ENCODE measurements at regions of chrX and their contacts with region 1.

Region 1: DNA sequence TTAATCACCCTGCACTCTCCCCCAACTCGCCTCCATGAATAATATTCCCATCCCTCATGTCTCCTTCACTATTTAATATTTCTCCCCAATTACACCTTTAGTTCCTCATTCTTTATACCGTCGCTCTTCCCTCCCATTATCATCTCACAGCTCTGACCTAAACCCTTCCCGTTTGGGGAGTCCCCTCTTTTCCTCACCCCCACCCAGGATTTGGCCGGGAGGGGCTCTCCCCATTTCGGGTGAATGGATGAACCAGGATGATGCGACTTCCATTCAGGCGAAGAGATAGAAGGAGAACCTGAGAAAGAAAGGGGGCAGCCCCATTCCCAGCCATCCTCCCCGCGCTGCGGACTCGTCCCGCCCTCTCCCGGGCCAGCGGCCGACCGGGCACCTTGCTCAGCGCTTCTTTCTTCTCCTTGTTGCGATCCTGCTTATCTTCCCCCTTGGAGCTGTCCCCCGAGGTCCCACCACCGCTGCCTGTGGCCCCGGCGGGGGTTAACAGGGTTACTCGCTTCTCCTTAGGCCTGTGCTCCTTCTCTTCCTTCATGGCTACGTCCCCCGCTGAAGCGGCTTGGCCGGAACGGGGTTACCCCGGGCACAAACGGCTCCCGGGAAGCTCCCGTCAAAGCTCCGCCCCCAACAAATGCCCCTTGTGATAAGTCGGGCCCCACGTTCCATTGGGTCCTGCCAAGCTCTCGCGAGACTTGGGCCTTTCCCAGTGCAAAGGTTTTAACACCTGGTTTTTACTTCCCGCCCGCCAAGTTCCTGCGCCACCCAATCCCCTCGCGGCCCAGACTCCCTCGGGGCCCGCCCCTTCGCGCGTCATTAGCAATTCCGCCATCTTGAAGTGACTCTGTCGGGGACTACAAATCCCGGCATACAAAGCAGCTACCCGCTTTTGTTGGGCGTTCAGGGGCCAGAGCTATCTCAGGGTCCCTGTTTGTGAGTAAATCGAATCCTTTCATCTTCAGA is at the start of gene UPF3B:
- DNase-seq: peak; percentile 98 to 99
- H3K4me3 ChIP-seq: peak within 1 kb of the TSS; percentile 89
- H3K27ac ChIP-seq: peak within 1 kb of the TSS; percentile 62
- H3K4me1 ChIP-seq: no peaks in the 10 kb centered on the region
- H3K27me3 ChIP-seq: no peaks in the 10 kb centered on the region
- CTCF ChIP-seq: no peak
- total RNA-seq, gene UPF3B: 19.8 and 24.3 TPM in 2 replicates

Region 2: DNA sequence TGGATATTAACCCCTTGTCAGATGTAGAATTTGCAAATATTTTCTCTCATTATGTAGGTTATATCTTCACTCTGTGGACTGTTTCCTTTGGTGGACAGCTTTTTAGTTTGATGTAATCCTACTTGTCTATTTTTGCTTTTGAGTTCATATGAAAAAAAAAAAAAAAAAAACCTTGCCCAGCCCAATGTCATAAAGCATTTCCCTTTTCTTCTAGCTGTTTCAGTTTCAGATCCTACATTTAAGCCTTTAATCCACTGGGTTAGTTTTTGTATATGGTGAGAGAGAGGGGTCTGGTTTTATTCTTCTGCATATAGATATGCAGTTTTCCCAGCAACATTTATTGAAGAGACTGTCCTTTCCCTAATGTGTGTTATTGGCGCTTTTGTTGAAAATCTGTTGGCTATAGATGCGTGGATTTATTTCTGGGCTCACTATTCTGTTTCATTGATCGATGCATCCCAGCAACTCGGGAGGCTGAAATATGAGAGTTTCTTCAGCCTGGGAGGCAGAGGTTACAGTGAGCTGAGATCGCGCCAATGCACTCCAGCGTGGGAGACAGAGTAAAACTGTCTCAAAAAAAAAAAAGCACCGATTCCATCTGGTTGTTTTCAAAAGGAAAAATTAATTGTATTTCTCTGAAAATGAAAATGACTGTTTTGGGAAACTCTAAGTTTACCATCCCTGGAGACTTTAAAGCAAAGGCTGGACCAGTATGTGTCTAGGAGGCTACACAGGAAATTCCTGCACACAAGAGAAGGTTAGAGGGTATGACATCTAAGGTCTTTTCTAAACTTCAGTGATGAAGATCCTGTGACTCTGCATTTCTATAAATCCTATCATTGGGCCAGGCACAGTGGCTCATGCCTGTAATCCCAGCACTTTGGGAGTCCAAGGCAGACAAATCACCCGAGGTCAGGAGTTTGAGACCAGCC is 323.1 kb before region 1 on chrX:
- CTCF ChIA-PET with region 1: no interaction called
- POLR2A ChIA-PET with region 1: interaction called, 30 read pairs
- intact Hi-C with region 1: no loop called
- DNase-seq: no peak
- H3K4me3 ChIP-seq: no peak overlapping the region
- H3K27ac ChIP-seq: no peak overlapping the region
- H3K4me1 ChIP-seq: no peaks in the 10 kb centered on the region
- H3K27me3 ChIP-seq: no peaks in the 10 kb centered on the region
- CTCF ChIP-seq: no peak

Region 3: DNA sequence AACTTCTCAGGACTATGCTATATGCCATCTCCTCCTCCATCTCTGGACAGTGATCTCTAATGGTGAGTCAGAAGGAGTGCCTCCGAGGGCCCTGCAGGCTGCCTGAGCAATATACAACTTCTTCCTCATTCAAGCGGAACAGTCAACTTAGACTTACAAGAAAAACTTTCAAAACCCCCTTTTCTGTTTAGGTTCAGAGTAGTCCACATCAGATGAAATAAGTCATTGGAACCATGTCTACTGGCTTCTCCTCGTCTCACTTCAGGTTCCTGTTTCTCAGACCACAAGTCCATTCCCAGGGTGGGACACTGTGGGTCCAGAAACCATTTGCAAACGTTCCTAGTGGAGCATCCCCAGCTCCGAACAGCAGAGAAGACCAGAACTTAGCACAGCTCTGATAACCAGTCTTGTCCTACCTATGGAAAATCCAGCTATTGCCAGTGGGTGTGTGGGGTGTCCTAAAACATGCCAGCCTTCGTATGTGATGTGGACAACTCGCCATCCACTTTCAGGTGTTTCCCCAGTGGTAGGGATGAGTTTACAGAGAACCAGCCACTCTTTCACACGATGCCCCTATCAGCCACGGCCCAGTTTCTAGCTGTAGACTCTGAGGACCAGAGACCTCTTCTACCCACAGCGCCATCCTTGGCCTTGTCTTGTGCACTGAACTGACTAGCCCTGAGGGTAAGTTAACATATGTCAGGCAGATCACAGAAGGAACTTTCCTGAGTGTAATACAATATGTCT is 213.8 kb before region 1 on chrX:
- CTCF ChIA-PET with region 1: no interaction called
- POLR2A ChIA-PET with region 1: no interaction called
- intact Hi-C with region 1: no loop called
- DNase-seq: no peak
- H3K4me3 ChIP-seq: no peak overlapping the region
- H3K27ac ChIP-seq: no peak overlapping the region
- H3K4me1 ChIP-seq: no peaks in the 10 kb centered on the region
- H3K27me3 ChIP-seq: no peaks in the 10 kb centered on the region
- CTCF ChIP-seq: no peak

Region 4: GRCh38 chrX:119745283-119745848 is 107.3 kb before region 1 on chrX:
- CTCF ChIA-PET with region 1: no interaction called
- POLR2A ChIA-PET with region 1: no interaction called
- intact Hi-C with region 1: no loop called
- DNase-seq: no peak
- H3K4me3 ChIP-seq: no peak overlapping the region
- H3K27ac ChIP-seq: no peak overlapping the region
- H3K4me1 ChIP-seq: no peaks in the 10 kb centered on the region
- H3K27me3 ChIP-seq: no peaks in the 10 kb centered on the region
- CTCF ChIP-seq: no peak

Measured in PC-9 (cell line).